ENCODE measurements at regions of chr3 and their contacts with region 1.

Region 1: GRCh38 chr3:25782938-25783660 is at the start of gene NGLY1:
- DNase-seq: peak; percentile 78 to 88 (median 83)
- ATAC-seq: peak; percentile 95
- H3K4me3 ChIP-seq: peak within 1 kb of the TSS; percentile 73
- H3K4me3 Mint-ChIP-seq: peak within 1 kb of the TSS; percentile 85 to 95 (median 92)
- H3K27ac ChIP-seq: peak within 1 kb of the TSS; percentile 89
- H3K27ac Mint-ChIP-seq: peak within 1 kb of the TSS; percentile 78 to 93 (median 87)
- H3K4me1 ChIP-seq: peaks cover 19 to 28% of the 10 kb centered on the region in 2 donors
- H3K4me1 Mint-ChIP-seq: peaks cover 25 to 61% (median 46%) of the 10 kb centered on the region in 7 donors
- H3K27me3 ChIP-seq: no peaks in the 10 kb centered on the region
- H3K27me3 Mint-ChIP-seq: no peaks in the 10 kb centered on the region
- total RNA-seq, gene NGLY1: 66.1 to 84.1 (median 70.4) TPM

Region 2: GRCh38 chr3:23945903-23946751 is 1837.0 kb before region 1 on chr3:
- CTCF ChIA-PET with region 1: no interaction called
- POLR2A ChIA-PET with region 1: no interaction called
- intact Hi-C with region 1: loop called (anchors 2 to 5 kb)
- DNase-seq: peak; percentile 93 to 98 (median 97)
- ATAC-seq: peak; percentile 89
- H3K4me3 ChIP-seq: peak overlapping the region; percentile 79
- H3K4me3 Mint-ChIP-seq: peak overlapping the region; percentile 70 to 90 (median 87)
- H3K27ac ChIP-seq: peak overlapping the region; percentile 81
- H3K27ac Mint-ChIP-seq: peak overlapping the region; percentile 53 to 95 (median 90)
- H3K4me1 ChIP-seq: peaks cover 28 to 31% of the 10 kb centered on the region in 2 donors
- H3K4me1 Mint-ChIP-seq: peaks cover 30 to 61% (median 48%) of the 10 kb centered on the region in 7 donors
- H3K27me3 ChIP-seq: no peaks in the 10 kb centered on the region
- H3K27me3 Mint-ChIP-seq: peaks cover 0 to 41% (median 0%) of the 10 kb centered on the region in 5 donors

Region 3: DNA sequence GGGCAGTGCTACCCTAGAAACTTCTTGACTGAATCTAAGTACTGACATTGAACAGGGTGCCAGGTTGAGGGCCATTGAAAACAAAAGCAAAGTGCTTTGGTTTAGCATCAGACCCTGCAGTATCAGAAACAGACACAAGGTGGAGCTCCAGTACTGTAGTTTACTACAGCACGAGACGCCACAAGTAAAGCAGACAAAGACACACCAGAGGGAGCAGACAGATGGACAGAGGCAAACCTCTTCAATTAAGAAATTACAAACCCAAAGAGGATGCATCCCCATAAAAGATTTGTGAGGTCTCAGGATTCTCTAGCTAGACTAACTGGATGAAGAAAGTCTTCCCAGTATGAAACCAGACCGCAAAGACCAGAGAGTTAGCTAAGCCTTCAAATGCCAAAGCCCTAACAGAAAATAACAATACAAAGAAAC is 135.0 kb before region 1 on chr3:
- CTCF ChIA-PET with region 1: interaction called, 4 read pairs
- POLR2A ChIA-PET with region 1: no interaction called
- intact Hi-C with region 1: loop called (anchors 5 kb)
- DNase-seq: peak; percentile 50 to 84 (median 76)
- ATAC-seq: peak; percentile 99
- H3K4me3 ChIP-seq: no peak overlapping the region
- H3K4me3 Mint-ChIP-seq: peak overlapping the region in 4 of 10 donors; percentile 2 to 16 (median 14)
- H3K27ac ChIP-seq: no peak overlapping the region
- H3K27ac Mint-ChIP-seq: peak overlapping the region in 8 of 9 donors; percentile 2 to 53 (median 12)
- H3K4me1 ChIP-seq: peaks cover 0 to 10% of the 10 kb centered on the region in 2 donors
- H3K4me1 Mint-ChIP-seq: peaks cover 22 to 59% (median 54%) of the 10 kb centered on the region in 7 donors
- H3K27me3 ChIP-seq: no peaks in the 10 kb centered on the region
- H3K27me3 Mint-ChIP-seq: no peaks in the 10 kb centered on the region

Region 4: GRCh38 chr3:25747033-25747432 is 36.1 kb before region 1 on chr3:
- CTCF ChIA-PET with region 1: no interaction called
- POLR2A ChIA-PET with region 1: interaction called, 4 read pairs
- intact Hi-C with region 1: loop called in 1 of 2 experiments (anchors 5 kb)
- DNase-seq: no peak
- ATAC-seq: no peak
- H3K4me3 ChIP-seq: no peak overlapping the region
- H3K4me3 Mint-ChIP-seq: no peak overlapping the region
- H3K27ac ChIP-seq: no peak overlapping the region
- H3K27ac Mint-ChIP-seq: no peak overlapping the region
- H3K4me1 ChIP-seq: no peaks in the 10 kb centered on the region
- H3K4me1 Mint-ChIP-seq: peaks cover 2 to 31% (median 11%) of the 10 kb centered on the region in 7 donors
- H3K27me3 ChIP-seq: no peaks in the 10 kb centered on the region
- H3K27me3 Mint-ChIP-seq: no peaks in the 10 kb centered on the region

Region 5: GRCh38 chr3:25812644-25813043 is 29.5 kb after region 1 on chr3:
- CTCF ChIA-PET with region 1: no interaction called
- POLR2A ChIA-PET with region 1: no interaction called
- intact Hi-C with region 1: no loop called
- DNase-seq: no peak
- ATAC-seq: no peak
- H3K4me3 ChIP-seq: no peak overlapping the region
- H3K4me3 Mint-ChIP-seq: no peak overlapping the region
- H3K27ac ChIP-seq: no peak overlapping the region
- H3K27ac Mint-ChIP-seq: no peak overlapping the region
- H3K4me1 ChIP-seq: no peaks in the 10 kb centered on the region
- H3K4me1 Mint-ChIP-seq: peaks cover 0 to 7% (median 0%) of the 10 kb centered on the region in 7 donors
- H3K27me3 ChIP-seq: no peaks in the 10 kb centered on the region
- H3K27me3 Mint-ChIP-seq: peaks cover 0 to 15% (median 6%) of the 10 kb centered on the region in 5 donors

Region 6: GRCh38 chr3:25856902-25857518 is 73.9 kb after region 1 on chr3:
- CTCF ChIA-PET with region 1: interaction called, 3 read pairs
- POLR2A ChIA-PET with region 1: interaction called, 3 read pairs
- intact Hi-C with region 1: loop called (anchors 1 to 2 kb)
- DNase-seq: peak in 7 of 9 donors; percentile 10 to 56 (median 37)
- ATAC-seq: peak; percentile 87
- H3K4me3 ChIP-seq: no peak overlapping the region
- H3K4me3 Mint-ChIP-seq: no peak overlapping the region
- H3K27ac ChIP-seq: no peak overlapping the region
- H3K27ac Mint-ChIP-seq: no peak overlapping the region
- H3K4me1 ChIP-seq: no peaks in the 10 kb centered on the region
- H3K4me1 Mint-ChIP-seq: peaks cover 0 to 3% (median 0%) of the 10 kb centered on the region in 7 donors
- H3K27me3 ChIP-seq: no peaks in the 10 kb centered on the region
- H3K27me3 Mint-ChIP-seq: no peaks in the 10 kb centered on the region